Heart left ventricle (tissue), 16 donors: ENCODE measurements at regions of chr11 and their contacts with region 1.

Region 1: DNA sequence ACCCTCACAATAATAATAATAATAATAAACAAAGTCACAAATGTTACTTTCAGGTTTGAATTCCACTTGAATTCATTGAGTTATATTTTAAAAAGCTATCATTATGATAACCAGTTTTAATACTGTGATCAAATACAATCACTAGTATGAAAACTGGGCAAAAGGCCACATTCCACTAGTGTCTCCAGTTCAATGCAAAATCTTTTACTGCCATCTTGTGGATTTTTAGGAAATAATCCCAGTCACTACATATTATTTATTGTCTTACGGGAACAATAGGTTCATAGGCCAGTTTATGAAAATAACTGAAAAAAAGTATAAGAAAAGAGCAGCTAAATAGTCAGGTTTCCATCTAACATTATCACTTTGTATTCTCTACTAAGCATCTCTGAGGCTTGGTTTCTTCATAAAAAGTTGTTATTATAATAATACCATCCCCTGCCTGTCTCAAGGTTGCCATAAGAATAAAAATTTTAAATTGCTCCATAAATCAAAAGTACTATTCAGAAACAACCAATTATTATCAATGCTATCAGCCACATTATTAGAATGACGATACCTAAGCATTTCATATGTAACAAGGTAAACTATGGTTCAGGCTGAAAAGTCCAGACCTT is 533.9 kb upstream of the CCDC90B start:
- DNase-seq: peak in 1 of 5 donors; percentile 16
- ATAC-seq: peak in 2 of 4 donors; percentile 48 to 63
- H3K4me3 ChIP-seq: no peak overlapping the region
- H3K27ac ChIP-seq: no peak overlapping the region
- H3K4me1 ChIP-seq: no peaks in the 10 kb centered on the region
- H3K27me3 ChIP-seq: no peaks in the 10 kb centered on the region
- CTCF ChIP-seq: peak; percentile 15 to 71 (median 60)
- POLR2A ChIP-seq: no peak

Region 2: GRCh38 chr11:82718307-82718706 is 1101.7 kb before region 1 on chr11:
- intact Hi-C with region 1: loop called in 3 of 10 experiments (anchors 10 kb)
- DNase-seq: peak in 1 of 5 donors; percentile 29
- ATAC-seq: peak; percentile 57 to 78 (median 68)
- H3K4me3 ChIP-seq: no peak overlapping the region
- H3K27ac ChIP-seq: no peak overlapping the region
- H3K4me1 ChIP-seq: peaks cover 0 to 18% (median 4%) of the 10 kb centered on the region in 12 donors
- H3K27me3 ChIP-seq: peaks cover 0 to 7% (median 0%) of the 10 kb centered on the region in 9 donors
- CTCF ChIP-seq: peak; percentile 49 to 80 (median 68)
- POLR2A ChIP-seq: no peak

Region 3: DNA sequence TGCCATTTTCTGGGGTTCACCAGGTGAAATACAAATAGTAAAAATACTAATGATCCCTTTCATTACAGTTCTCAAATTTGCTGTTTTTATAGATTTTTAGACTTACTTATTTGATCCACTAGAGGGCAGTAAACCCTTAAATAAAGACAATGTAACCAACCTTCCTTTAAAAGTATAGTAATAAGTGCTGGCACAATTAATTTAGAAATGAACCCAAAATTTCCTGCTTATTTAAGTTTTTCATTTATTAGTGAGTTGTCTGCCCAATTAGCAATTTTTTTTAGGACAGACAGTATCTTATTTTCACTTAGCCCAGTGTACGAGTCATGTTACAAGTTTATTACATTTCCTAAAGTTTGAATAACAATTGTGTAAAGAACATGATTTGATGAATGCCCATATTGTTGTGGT is 913.8 kb before region 1 on chr11:
- intact Hi-C with region 1: loop called in 4 of 10 experiments (anchors 5 to 10 kb)
- DNase-seq: no peak
- ATAC-seq: no peak
- H3K4me3 ChIP-seq: no peak overlapping the region
- H3K27ac ChIP-seq: peak overlapping the region in 1 of 12 donors; percentile 6
- H3K4me1 ChIP-seq: peaks cover 0 to 21% (median 3%) of the 10 kb centered on the region in 12 donors
- H3K27me3 ChIP-seq: no peaks in the 10 kb centered on the region
- CTCF ChIP-seq: peak; percentile 53 to 77 (median 72)
- POLR2A ChIP-seq: no peak

Region 4: DNA sequence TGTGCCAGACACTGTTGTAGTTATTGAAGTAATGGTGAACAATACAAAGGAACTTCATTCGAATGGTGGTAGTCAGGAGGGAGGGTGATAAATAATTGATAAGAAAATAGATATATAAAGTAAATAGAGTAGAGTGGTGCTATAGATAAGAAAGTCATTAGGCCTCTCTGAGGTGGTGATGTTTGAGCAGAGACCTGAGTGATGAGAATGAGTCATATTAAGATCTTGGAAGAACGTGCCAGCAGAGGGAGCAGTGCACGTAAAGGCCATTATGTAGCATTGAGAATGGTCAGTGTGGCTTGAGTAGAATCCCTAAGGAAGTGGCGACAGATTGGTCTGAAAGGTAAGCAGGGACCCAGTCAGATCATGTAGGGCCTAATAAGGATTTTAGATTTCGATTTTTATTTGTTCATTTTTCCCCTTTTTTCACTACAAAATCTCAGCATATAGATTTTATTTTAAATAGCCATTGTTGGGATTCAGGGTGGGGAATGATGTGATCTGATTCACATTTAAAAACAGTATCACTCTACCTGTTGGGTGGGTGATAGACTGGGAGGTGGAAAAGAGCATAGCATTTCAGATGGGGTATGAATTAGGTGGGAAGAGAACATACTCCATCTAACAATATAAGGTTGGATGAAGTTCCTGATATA is 578.6 kb before region 1 on chr11:
- intact Hi-C with region 1: loop called in 4 of 10 experiments (anchors 5 to 10 kb)
- DNase-seq: peak in 2 of 5 donors; percentile 41 to 52
- ATAC-seq: peak in 3 of 4 donors; percentile 62 to 88 (median 79)
- H3K4me3 ChIP-seq: no peak overlapping the region
- H3K27ac ChIP-seq: no peak overlapping the region
- H3K4me1 ChIP-seq: no peaks in the 10 kb centered on the region
- H3K27me3 ChIP-seq: no peaks in the 10 kb centered on the region
- CTCF ChIP-seq: peak; percentile 31 to 69 (median 49)
- POLR2A ChIP-seq: no peak

Region 5: GRCh38 chr11:83292709-83293456 is 527.2 kb before region 1 on chr11:
- intact Hi-C with region 1: loop called (anchors 2 to 5 kb)
- DNase-seq: no peak
- ATAC-seq: peak in 3 of 4 donors; percentile 50 to 70 (median 61)
- H3K4me3 ChIP-seq: peak overlapping the region in 3 of 12 donors; percentile 4 to 14 (median 6)
- H3K27ac ChIP-seq: no peak overlapping the region
- H3K4me1 ChIP-seq: peaks cover 0 to 3% (median 0%) of the 10 kb centered on the region in 12 donors
- H3K27me3 ChIP-seq: no peaks in the 10 kb centered on the region
- CTCF ChIP-seq: peak; percentile 48 to 75 (median 62)
- POLR2A ChIP-seq: no peak

Region 6: DNA sequence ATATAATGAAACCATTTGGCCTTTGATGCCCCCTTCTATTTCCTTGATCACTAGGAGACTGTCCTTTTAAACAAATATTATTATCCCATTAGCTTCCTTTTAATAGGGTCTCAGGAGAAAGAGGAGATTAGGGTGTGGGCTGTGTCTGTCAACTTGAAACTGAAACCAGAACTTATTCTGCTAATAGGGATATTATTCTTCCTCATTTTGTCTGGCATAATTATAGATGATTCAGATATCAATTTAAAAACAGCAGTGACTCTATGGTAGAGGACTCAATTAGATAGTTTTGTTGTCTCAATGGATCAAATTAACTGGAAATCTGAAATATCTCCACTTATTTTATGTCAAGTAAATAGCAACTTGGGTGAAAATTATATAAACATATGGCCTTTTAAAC is 51.0 kb after region 1 on chr11:
- intact Hi-C with region 1: loop called in 1 of 10 experiments (anchors 10 kb)
- DNase-seq: no peak
- ATAC-seq: no peak
- H3K4me3 ChIP-seq: no peak overlapping the region
- H3K27ac ChIP-seq: no peak overlapping the region
- H3K4me1 ChIP-seq: no peaks in the 10 kb centered on the region
- H3K27me3 ChIP-seq: no peaks in the 10 kb centered on the region
- CTCF ChIP-seq: no peak
- POLR2A ChIP-seq: no peak